ENCODE measurements at regions of chr1 and their contacts with region 1.

Region 1: GRCh38 chr1:85148524-85149250 is 52.1 kb downstream of the SYDE2 start:
- DNase-seq: peak; percentile 70
- H3K4me3 Mint-ChIP-seq: peak overlapping the region; percentile 11
- H3K27ac Mint-ChIP-seq: peak overlapping the region; percentile 78
- H3K4me1 Mint-ChIP-seq: peaks cover 27% of the 10 kb centered on the region
- H3K27me3 Mint-ChIP-seq: no peaks in the 10 kb centered on the region

Region 2: GRCh38 chr1:85200870-85201339 is 52.2 kb after region 1 on chr1 and contains the start of gene SYDE2:
- intact Hi-C with region 1: loop called (anchors 5 kb)
- DNase-seq: peak; percentile 94
- H3K4me3 Mint-ChIP-seq: peak within 1 kb of the TSS; percentile 94
- H3K27ac Mint-ChIP-seq: peak within 1 kb of the TSS; percentile 87
- H3K4me1 Mint-ChIP-seq: peaks cover 12% of the 10 kb centered on the region
- H3K27me3 Mint-ChIP-seq: peaks cover 39% of the 10 kb centered on the region
- total RNA-seq, gene SYDE2: 1.2 and 1.4 TPM in 2 replicates